PC-3 (cell line): ENCODE measurements at regions of chr2 and their contacts with region 1.

Region 1: DNA sequence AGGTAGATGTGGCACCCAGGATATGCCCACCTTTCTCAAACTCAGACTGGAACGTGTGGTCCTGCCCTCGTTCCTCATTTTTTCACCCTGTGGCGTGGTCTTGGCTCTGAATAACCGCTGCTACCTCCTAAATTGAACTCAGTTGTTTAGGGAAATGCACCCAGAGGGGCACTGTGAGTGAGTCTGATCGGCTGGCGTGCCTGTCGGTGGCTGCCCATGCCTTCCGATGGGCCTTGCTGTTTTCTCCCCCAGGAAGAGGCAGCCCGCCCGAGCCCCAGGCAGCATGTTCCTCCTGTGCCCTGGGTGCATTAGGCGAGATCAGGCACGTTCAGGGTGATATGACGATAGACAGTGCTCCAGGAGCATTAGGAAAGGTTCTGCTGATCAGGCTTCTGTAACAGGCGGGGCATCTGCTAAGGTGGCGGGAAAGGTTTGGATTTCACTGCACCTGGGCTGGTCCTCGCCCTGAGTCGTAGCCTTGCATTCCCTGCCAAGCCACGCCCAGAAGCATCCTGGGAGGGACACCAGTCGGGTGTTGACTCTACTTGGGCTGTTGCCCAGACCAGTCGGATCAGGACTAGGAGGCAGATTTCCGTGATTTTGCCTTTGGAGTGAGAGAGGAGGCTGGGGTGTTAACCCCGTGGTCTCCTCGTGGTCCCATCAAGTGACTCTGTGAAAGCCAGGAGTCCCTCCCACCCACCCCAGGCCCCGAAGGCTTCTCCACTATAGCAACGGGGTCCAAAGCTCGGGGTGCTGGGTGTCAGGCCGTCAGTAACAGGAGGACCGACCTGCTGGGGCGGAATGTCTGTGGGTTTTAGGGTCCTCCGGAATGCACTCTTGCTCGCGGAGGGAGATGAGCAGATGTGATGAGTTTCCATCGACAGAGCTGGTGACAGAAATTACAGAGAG is 75.1 kb downstream of the SH3BP4 start:
- DNase-seq: peak; percentile 99
- ATAC-seq: peak; percentile 73
- H3K4me3 ChIP-seq: peak overlapping the region; percentile 65
- H3K27ac ChIP-seq: peak overlapping the region; percentile 98
- H3K4me1 ChIP-seq: peaks cover 68% of the 10 kb centered on the region
- H3K27me3 ChIP-seq: no peaks in the 10 kb centered on the region
- CTCF ChIP-seq: no peak

Region 2: DNA sequence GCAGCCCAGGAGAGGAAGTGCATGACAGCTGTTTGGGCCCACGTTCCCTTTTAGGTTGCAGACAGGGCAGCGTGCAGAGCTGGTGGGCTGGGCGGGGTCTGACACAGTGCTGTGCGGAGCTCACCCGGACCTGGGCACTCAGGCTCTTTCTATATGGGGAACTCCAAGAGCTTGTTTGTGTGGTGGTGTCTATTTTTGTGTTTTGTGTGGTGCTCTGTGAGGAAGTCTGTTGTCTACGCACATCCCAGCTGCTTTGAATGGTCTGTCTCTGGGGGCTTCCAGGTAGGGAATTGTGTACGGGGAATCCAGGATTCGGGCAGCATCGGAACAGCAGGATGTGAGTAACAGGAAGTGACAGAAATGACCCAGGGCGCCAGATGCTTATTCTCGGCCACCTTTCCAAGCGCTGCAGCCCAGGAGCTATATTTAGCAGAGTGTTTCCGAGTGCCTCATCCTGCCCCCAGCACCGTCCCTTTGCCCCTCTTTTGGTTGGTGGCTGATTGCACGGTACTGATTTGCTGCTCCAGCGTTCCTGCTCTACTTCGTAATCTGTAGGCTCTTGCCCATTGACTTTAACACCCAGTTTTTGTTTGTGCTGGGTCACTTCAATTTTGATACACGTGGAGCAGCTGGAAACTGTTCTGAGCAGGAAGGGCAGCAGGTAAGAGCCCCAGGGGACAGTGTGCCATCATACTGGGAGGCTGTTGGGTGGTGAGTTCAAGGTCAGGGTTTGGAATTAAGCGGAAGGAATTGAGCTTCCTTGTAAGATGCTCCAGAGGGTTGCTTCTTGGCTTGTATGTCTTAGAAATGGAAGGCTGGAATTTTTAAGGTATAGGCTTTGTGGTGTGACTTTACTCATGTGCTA is 1607.9 kb before region 1 on chr2:
- CTCF ChIA-PET with region 1: no interaction called
- POLR2A ChIA-PET with region 1: no interaction called
- intact Hi-C with region 1: loop called (anchors 10 kb)
- DNase-seq: peak; percentile 81
- ATAC-seq: peak; percentile 13
- H3K4me3 ChIP-seq: peak overlapping the region; percentile 63
- H3K27ac ChIP-seq: peak overlapping the region; percentile 96
- H3K4me1 ChIP-seq: peaks cover 94% of the 10 kb centered on the region
- H3K27me3 ChIP-seq: no peaks in the 10 kb centered on the region
- CTCF ChIP-seq: no peak

Region 3: DNA sequence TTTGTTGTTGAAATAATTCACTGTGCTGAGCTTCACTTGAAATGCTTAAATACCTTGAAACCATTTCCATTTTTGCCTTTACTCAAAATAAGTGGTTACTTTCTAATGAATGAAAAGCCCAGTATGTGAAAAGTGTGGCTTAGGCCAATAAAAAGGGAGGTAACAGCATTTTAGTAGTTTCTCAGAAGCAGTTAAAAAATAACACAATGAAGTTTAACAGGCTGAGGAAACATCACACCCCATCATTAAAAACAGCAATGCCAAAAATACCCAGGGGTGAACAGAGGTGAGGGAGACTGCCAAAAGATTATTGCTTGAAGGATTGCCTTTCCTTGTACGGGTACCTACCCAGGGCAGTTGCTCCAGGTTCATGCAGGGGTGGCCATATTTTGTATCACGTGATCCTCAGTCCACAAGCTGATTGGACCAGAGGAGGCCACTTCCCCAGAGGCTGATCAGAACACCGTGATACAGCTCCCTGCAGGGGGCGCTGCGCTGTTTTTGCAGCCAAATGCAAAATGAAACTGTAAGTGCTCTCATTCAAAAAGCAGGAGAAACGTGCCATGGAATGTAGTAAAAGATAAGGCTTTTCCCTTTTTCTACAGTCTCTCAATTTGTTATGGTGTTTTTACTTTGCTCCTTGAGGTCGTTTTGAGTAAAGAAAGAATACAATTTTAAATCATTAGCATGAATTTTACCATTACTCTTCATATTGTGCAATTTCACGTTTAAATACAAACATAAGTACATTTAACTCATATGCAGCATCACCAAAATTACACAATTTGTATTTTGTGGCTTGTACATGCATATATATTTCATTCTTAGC is 145.3 kb before region 1 on chr2:
- CTCF ChIA-PET with region 1: interaction called, 3 read pairs
- POLR2A ChIA-PET with region 1: no interaction called
- intact Hi-C with region 1: loop called (anchors 1 kb)
- DNase-seq: peak; percentile 93
- ATAC-seq: peak; percentile 94
- H3K4me3 ChIP-seq: peak overlapping the region; percentile 62
- H3K27ac ChIP-seq: peak overlapping the region; percentile 67
- H3K4me1 ChIP-seq: peaks cover 33% of the 10 kb centered on the region
- H3K27me3 ChIP-seq: no peaks in the 10 kb centered on the region
- CTCF ChIP-seq: peak; percentile 94

Region 4: GRCh38 chr2:234981197-234982117 is 45.4 kb before region 1 on chr2:
- CTCF ChIA-PET with region 1: no interaction called
- POLR2A ChIA-PET with region 1: interaction called, 15 read pairs
- intact Hi-C with region 1: loop called (anchors 1 kb)
- DNase-seq: peak; percentile 94
- ATAC-seq: peak; percentile 79
- H3K4me3 ChIP-seq: peak overlapping the region; percentile 67
- H3K27ac ChIP-seq: peak overlapping the region; percentile 96
- H3K4me1 ChIP-seq: peaks cover 53% of the 10 kb centered on the region
- H3K27me3 ChIP-seq: no peaks in the 10 kb centered on the region
- CTCF ChIP-seq: peak; percentile 26; the same call in 1 of the 2 replicates

Region 5: GRCh38 chr2:235098736-235099494 is 72.0 kb after region 1 on chr2:
- CTCF ChIA-PET with region 1: no interaction called
- POLR2A ChIA-PET with region 1: no interaction called
- intact Hi-C with region 1: loop called (anchors 1 kb)
- DNase-seq: peak; percentile 70
- ATAC-seq: peak; percentile 90
- H3K4me3 ChIP-seq: no peak overlapping the region; the same call in 1 of the 2 replicates
- H3K27ac ChIP-seq: peak overlapping the region; percentile 24
- H3K4me1 ChIP-seq: peaks cover 24% of the 10 kb centered on the region
- H3K27me3 ChIP-seq: no peaks in the 10 kb centered on the region
- CTCF ChIP-seq: no peak